AG04450 (cell line): ENCODE measurements at regions of chr2 and their contacts with region 1.

Region 1: GRCh38 chr2:234544659-234545611 is 48.1 kb upstream of the ARL4C start:
- DNase-seq: no peak
- H3K4me3 ChIP-seq: no peak overlapping the region
- H3K27ac ChIP-seq: no peak overlapping the region
- H3K27me3 ChIP-seq: peaks cover 2% of the 10 kb centered on the region
- CTCF ChIP-seq: peak; percentile 88

Region 2: GRCh38 chr2:233982421-233983121 is 562.4 kb before region 1 on chr2:
- CTCF ChIA-PET with region 1: interaction called, 53 read pairs
- POLR2A ChIA-PET with region 1: no interaction called
- DNase-seq: peak; percentile 84
- H3K4me3 ChIP-seq: no peak overlapping the region
- H3K27ac ChIP-seq: peak overlapping the region; percentile 90
- H3K27me3 ChIP-seq: no peaks in the 10 kb centered on the region
- CTCF ChIP-seq: no peak

Region 3: DNA sequence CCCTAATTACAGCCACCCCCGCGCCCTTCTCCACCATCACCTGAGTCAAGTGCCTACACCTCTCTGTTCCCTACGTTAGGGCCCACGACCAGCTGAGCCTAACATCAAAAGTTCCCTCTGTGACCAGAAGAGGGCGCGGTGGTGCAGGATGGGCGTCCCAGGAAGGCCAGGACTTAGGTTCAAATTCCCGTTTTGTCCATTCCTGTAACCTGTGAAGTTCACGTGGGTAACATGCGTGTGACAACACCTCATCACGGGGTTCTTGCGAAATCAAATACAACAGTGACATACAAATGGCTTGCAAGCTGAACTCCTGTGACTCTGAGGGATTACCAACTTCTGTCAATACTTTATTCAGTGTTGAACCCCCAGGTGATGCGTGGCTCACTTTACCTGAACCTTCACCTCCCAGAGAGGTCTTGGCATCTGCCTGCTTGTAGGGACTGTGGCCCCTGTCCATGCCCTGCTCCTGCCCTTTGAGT is 255.9 kb before region 1 on chr2:
- CTCF ChIA-PET with region 1: interaction called, 10 read pairs
- POLR2A ChIA-PET with region 1: no interaction called
- DNase-seq: no peak
- H3K4me3 ChIP-seq: no peak overlapping the region
- H3K27ac ChIP-seq: peak overlapping the region; percentile 2
- H3K27me3 ChIP-seq: no peaks in the 10 kb centered on the region
- CTCF ChIP-seq: peak; percentile 80

Region 4: GRCh38 chr2:234533626-234534025 is 11.3 kb before region 1 on chr2:
- CTCF ChIA-PET with region 1: interaction called, 32 read pairs
- POLR2A ChIA-PET with region 1: no interaction called
- DNase-seq: no peak
- H3K4me3 ChIP-seq: no peak overlapping the region
- H3K27ac ChIP-seq: no peak overlapping the region
- H3K27me3 ChIP-seq: peaks cover 29% of the 10 kb centered on the region
- CTCF ChIP-seq: no peak

Region 5: DNA sequence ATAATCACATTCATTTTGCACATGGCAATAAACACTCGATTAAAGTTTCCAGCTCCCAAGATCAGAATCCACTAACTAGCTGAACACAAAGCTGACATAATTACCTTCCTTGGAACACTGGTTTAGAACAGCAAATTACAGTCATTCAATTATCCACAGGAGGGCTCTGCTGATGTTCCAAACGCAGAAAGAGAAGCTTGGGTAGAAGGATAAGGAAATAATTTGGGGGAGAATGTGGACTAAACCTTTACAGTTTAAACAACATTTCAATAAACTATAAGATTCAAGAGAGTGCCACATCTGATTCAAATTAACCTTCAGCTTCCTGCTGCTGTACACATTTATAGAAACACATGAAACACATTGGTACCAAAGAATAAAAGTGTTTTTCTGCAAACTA is 19.8 kb after region 1 on chr2:
- CTCF ChIA-PET with region 1: interaction called, 14 read pairs
- POLR2A ChIA-PET with region 1: no interaction called
- DNase-seq: peak; percentile 49
- H3K4me3 ChIP-seq: no peak overlapping the region
- H3K27ac ChIP-seq: no peak overlapping the region
- H3K27me3 ChIP-seq: no peaks in the 10 kb centered on the region
- CTCF ChIP-seq: peak; percentile 64

Region 6: GRCh38 chr2:234577191-234577590 is 32.3 kb after region 1 on chr2:
- CTCF ChIA-PET with region 1: no interaction called
- POLR2A ChIA-PET with region 1: no interaction called
- DNase-seq: no peak
- H3K4me3 ChIP-seq: no peak overlapping the region
- H3K27ac ChIP-seq: no peak overlapping the region
- H3K27me3 ChIP-seq: no peaks in the 10 kb centered on the region
- CTCF ChIP-seq: no peak

Region 7: GRCh38 chr2:235106874-235107639 is 562.1 kb after region 1 on chr2:
- CTCF ChIA-PET with region 1: interaction called, 15 read pairs
- POLR2A ChIA-PET with region 1: no interaction called
- DNase-seq: peak; percentile 43
- H3K4me3 ChIP-seq: no peak overlapping the region
- H3K27ac ChIP-seq: no peak overlapping the region
- H3K27me3 ChIP-seq: no peaks in the 10 kb centered on the region
- CTCF ChIP-seq: peak; percentile 82